Posterior vena cava (tissue), 2 donors: ENCODE measurements at regions of chr11 and their contacts with region 1.

Region 1: GRCh38 chr11:117606211-117606610 is 190.8 kb downstream of the DSCAML1 start:
- DNase-seq: no peak

Region 2: GRCh38 chr11:116948391-116948790 is 657.8 kb before region 1 on chr11:
- intact Hi-C with region 1: no loop called
- DNase-seq: no peak

Region 3: DNA sequence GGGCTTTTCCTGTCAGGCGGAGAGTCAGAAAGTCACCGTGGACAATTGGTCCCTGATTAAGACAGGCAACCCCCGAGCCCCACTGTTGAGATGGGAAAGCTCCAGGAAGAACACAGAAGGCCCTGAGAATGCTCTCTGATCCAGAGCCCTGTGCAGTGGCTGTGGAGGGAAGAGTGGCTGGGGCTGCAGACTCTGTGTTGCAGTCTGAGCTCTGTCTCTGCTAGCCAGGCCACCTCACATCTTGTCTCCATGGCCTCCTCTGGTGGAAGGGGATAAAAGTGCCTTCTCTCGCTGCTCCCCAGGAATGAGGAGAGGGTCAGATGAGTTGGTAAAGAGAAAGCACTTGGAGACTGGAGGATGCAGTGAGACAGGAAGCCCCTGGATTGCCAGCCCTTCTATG is 137.3 kb before region 1 on chr11:
- intact Hi-C with region 1: no loop called
- DNase-seq: peak; percentile 32

Region 4: GRCh38 chr11:117585631-117586030 is 20.6 kb before region 1 on chr11:
- intact Hi-C with region 1: loop called in 1 of 2 experiments (anchors 1 kb)
- DNase-seq: no peak

Region 5: DNA sequence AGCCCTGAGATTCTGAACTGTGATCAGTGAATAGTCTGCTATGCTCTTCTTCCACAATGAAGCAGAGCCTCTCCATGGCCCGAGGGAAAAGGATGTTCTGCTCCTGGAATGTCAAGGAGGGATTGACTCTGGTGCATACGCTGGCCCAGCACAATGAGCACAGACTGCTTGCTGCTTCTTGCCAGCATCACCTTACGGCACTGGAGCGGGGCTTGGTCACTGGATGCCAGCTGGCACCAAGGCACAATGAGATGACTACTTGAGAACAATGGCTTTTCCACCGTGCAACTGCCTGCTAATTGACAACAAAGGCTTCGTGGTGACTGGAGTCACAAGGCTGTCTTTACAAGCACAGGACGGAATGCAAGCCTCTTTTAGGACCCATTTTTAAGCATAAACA is 51.6 kb after region 1 on chr11:
- intact Hi-C with region 1: no loop called
- DNase-seq: no peak